GM13977 (cell line): ENCODE measurements at regions of chr9 and their contacts with region 1.

Region 1: GRCh38 chr9:34899535-34900158 is 58.4 kb upstream of the PHF24 start:
- DNase-seq: peak; percentile 69
- CTCF ChIP-seq: peak; percentile 84

Region 2: GRCh38 chr9:34744295-34745221 is 155.1 kb before region 1 on chr9:
- in situ Hi-C with region 1: no loop called
- DNase-seq: no peak
- CTCF ChIP-seq: no peak

Region 3: GRCh38 chr9:34989003-34989945 is 89.6 kb after region 1 on chr9 and contains the start of gene DNAJB5:
- in situ Hi-C with region 1: loop called (anchors 10 kb)
- DNase-seq: peak; percentile 98
- CTCF ChIP-seq: no peak

Region 4: DNA sequence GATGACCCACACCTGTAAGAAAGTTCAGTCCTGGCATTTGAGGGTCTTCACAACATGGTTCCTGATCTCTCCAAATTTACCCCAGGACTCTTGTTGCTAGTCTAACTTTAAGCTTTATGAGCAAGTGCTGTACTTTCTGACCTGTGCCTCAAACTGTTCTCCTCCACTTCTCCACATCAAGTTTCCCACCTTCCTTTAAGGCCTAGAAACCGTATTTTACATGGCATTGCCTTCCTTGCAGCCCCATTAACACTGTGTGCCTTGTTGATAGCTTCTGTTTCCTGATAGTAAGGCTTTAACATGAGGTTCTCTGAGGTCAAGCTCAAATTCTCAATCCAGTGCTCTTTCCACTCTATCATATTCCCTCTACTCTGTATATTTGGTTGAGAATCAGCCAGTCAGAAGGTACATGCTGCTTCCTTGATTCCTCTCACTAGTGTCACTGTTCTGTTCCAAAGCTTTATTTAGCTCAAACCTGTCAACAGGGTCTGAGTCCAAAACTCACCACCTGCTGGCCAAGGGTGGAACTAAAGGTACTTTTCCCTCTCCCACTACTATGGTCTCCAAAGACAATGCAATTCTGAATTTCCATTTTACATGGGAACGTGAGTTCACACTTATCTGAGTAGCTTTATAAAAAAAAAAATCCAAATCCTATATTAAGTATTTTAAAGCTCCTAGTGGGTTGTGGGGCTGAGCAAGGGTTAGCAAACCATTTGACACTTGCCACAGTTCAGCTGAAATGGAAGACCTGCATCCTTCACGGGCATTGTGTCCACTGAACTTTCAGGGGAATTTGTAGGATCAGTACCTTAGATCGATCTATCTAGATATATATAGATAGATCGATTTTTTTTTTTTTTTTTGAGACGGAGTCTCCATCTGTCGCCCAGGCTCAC is 151.7 kb after region 1 on chr9:
- in situ Hi-C with region 1: loop called (anchors 10 kb)
- DNase-seq: peak; percentile 53
- CTCF ChIP-seq: peak; percentile 67

Region 5: GRCh38 chr9:35258676-35259474 is 359.2 kb after region 1 on chr9:
- in situ Hi-C with region 1: loop called (anchors 25 kb)
- DNase-seq: peak; percentile 24
- CTCF ChIP-seq: peak; percentile 66

Region 6: GRCh38 chr9:35385042-35385441 is 485.4 kb after region 1 on chr9:
- in situ Hi-C with region 1: no loop called
- DNase-seq: no peak
- CTCF ChIP-seq: no peak

Region 7: DNA sequence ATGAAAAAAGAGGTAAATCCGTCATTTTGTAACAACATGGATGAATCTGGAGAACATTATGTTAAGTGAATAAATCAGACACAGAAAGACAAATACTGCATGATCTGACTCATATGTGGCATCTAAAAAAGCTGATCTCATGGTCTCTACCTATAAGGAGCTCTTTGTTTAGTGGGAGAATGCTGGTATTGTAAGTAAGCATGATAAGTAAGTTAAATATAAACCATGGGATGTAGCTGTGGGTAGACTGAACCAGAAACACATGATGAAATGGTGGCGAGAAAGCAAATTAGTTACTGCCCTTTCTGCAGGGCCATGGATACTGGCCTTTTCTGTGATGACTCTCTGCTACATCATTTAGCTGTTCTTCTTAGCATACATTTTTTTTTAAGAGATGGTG is 523.9 kb after region 1 on chr9:
- in situ Hi-C with region 1: no loop called
- DNase-seq: no peak
- CTCF ChIP-seq: no peak